ENCODE measurements at regions of chr7 and their contacts with region 1.

Region 1: DNA sequence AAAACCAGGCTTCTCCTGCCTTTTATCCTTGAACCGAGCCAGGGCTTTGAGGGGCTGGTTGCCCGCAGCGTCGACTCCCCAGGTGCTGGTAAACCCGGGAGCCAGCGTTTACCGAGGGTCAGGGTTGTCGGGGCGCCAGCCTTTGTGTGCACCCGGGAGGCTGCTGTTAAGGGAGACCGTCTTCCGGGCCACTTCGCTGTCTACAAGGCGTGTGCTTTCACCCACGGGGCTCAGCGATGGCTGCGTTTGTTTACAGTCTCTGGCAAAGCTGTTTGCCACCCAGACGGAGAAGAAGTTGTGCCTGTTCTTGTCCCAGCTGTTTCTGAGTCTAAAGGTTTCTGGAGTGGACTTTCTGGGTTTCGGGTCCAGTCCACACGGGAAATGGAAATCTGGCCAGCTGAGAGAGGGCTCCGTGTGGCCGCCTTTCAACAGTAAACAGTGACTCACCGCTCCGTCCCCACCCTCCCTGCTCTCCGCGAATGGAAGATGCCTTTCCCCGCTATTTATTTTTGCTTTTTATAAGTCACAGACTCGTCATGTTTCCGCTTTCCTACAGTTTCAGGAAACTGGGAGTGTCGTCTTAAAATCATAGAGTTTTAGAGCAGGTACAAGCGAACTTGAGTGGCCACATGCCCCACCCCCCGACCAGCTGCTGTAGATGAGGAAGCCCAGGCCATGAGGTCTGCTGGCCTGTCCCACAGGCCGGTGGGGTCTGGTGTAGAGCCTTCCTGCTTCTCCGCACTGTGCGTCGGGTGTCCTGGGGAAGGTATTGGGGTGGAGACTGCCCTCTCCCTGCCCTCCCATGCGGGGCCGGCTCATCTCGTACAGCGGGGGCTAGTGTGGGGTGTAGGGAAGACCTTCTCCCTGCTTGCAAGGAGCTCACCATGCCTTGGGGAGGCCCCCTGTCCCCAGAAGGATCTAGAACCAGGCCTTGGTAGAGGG is 2.3 kb downstream of the MAFK start:
- DNase-seq: no peak
- H3K4me3 ChIP-seq: peak overlapping the region in 1 of 4 experiments; percentile 66; a peak in 1 of 8 replicates
- H3K27ac ChIP-seq: no peak overlapping the region
- H3K4me1 ChIP-seq: peaks cover 13 to 44% (median 32%) of the 10 kb centered on the region in 4 experiments
- H3K27me3 ChIP-seq: no peaks in the 10 kb centered on the region; a peak in 2 of 7 replicates
- CTCF ChIP-seq: no peak
- EP300 ChIP-seq: no peak
- POLR2A ChIP-seq: no peak
- RAD21 ChIP-seq: no peak

Region 2: GRCh38 chr7:1548438-1548831 is 15.7 kb after region 1 on chr7:
- CTCF ChIA-PET with region 1: interaction called, 7 read pairs
- POLR2A ChIA-PET with region 1: interaction called, 26 read pairs
- DNase-seq: no peak
- H3K4me3 ChIP-seq: no peak overlapping the region
- H3K27ac ChIP-seq: no peak overlapping the region
- H3K4me1 ChIP-seq: no peaks in the 10 kb centered on the region
- H3K27me3 ChIP-seq: no peaks in the 10 kb centered on the region
- CTCF ChIP-seq: no peak
- EP300 ChIP-seq: no peak
- POLR2A ChIP-seq: no peak
- RAD21 ChIP-seq: peak; percentile 27 to 29; a peak in 3 of 4 replicates

Measured in H1 (cell line).